CD8-positive, alpha-beta T cell (primary cell): ENCODE measurements at regions of chr16 and their contacts with region 1.

Region 1: DNA sequence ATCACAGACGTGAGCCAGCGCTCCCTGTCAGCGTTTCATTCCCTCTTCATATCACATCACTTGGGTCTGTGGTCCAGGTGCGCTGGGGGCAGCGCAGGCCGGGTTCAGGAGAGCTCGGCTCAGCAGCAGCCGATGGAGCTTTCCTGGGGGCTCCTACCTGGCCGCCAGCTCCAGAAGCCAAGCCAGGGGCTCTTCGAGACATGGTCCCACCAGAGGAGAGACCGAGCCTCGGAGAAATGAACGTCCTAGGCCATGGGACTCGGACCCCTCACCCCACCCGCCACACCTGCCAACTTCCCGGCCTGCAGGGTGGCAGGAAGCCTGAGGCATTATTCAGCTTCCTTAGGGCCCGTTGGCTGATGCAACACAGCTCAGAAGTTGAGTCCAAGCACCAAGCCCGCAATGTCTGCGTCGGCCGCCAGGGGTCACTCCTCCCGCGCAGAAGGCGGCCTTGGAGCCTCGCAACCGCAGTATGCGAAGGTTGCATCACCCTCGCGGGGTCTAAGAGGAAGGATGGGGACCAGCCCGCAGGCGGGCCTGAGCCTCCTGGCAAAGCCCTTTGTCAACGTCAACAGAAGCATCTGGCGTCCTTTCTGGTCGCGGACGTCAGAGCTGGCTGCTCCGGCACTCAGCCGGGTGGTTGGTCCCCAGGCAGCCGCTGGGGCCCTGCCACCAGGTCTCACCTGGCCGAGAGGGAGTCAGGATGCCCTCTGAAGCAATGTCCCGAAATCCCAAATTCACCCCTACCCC is 13.2 kb upstream of the KLHDC4 start:
- DNase-seq: peak; percentile 85 to 97 (median 94)
- ATAC-seq: peak; percentile 87
- H3K4me3 ChIP-seq: no peak overlapping the region
- H3K4me3 Mint-ChIP-seq: peak overlapping the region; percentile 39
- H3K27ac ChIP-seq: no peak overlapping the region
- H3K27ac Mint-ChIP-seq: peak overlapping the region; percentile 80
- H3K4me1 ChIP-seq: peaks cover 43% of the 10 kb centered on the region
- H3K4me1 Mint-ChIP-seq: peaks cover 38% of the 10 kb centered on the region
- H3K27me3 ChIP-seq: no peaks in the 10 kb centered on the region
- H3K27me3 Mint-ChIP-seq: peaks cover 2% of the 10 kb centered on the region
- CTCF ChIP-seq: peak; percentile 84

Region 2: DNA sequence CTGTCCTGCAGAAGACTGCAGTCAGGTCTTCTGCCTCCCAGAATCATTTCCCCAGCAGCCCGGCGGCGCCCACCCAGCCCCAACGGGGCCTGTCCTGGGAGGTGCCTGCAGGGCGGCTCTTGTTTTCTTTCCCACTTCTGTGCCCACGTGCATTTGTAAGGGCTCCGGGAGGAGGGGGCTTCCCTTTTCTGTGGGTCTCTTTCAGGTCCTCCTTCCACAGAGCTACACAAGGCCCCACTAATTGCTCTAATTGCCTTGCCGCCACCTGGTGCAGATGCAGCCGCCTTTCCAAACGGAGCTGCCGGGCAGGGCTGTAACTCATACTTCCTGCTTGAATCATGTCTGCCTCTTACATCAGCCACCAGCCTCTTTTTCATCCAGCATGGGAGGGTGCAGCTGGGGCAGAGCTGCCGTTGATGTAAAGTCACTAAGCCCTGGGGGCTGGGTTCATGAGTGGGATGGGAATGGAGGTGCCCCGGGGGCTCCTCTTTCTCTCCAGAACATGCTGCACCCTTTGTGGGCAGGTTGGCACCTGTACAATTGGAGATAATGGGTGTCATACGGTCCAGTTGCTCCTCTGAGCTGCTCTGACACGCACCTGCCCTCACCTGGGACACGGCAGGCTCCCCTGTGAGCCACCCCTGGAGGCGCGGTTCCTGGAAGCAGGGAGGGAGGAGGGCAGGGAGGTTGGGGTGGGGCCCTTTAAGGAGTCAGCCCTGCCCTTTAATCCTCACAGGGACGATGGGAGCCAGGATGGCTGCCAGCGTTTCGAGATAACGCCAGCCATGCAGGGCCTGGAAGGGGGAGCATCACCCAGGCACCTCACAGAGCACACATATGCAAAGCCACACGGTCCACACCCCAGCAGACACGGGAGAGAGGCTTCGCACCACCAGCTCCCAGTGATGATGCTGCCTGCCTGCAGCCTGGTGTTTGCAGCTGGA is 27.9 kb after region 1 on chr16:
- CTCF ChIA-PET with region 1: interaction called, 21 read pairs
- POLR2A ChIA-PET with region 1: interaction called, 3 read pairs
- intact Hi-C with region 1: no loop called
- DNase-seq: peak in 7 of 9 experiments; percentile 20 to 77 (median 61)
- ATAC-seq: peak; percentile 84
- H3K4me3 ChIP-seq: peak overlapping the region; percentile 30 to 48
- H3K4me3 Mint-ChIP-seq: peak overlapping the region; percentile 90
- H3K27ac ChIP-seq: peak overlapping the region in 1 of 2 experiments; percentile 40
- H3K27ac Mint-ChIP-seq: peak overlapping the region; percentile 93
- H3K4me1 ChIP-seq: peaks cover 17% of the 10 kb centered on the region
- H3K4me1 Mint-ChIP-seq: peaks cover 12% of the 10 kb centered on the region
- H3K27me3 ChIP-seq: peaks cover 0 to 2% of the 10 kb centered on the region in 2 experiments
- H3K27me3 Mint-ChIP-seq: no peaks in the 10 kb centered on the region
- CTCF ChIP-seq: no peak

Region 3: DNA sequence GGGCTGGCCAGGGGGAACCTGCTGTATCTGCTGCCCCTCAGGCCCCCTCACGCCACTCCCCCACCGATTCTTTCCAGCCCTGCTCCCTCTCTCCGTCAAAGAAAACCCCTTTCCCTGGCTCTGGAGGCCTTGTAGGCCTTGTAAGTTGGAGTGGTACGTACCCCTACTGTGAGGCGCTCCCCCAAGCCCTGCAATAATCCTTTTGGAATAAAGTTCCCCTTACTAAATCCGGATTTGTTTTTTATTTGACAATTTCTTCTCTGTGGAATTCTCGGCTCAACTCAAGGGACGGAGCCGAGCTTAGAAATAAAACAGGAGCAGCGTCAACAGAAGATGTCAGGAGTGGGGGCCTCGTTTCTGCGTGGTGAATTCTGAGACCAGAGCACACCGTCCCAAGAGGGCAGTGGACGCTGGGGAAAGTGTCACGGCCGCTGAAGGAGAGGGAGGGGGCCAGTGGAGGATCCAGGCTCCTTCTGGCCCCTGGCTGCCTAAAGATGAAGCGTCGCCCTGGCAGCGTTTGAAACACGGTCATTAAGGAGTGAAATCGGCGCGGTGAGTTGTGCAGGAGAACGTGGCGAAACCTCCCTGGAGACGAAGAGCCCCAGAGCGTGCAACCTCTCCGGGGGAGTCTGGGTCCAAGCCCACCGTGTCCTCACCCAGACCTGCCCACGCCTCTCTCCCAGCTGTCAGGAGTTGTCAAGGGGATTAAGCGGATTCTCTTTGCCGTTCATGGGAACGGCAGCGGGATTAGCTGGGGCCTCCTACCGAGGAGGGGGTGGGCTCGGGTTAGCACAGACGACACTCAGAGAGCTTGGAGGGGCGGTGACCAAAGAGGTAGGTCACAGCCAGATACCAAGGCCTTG is 43.3 kb after region 1 on chr16:
- CTCF ChIA-PET with region 1: interaction called, 16 read pairs
- POLR2A ChIA-PET with region 1: no interaction called
- intact Hi-C with region 1: no loop called
- DNase-seq: peak in 3 of 9 experiments; percentile 18 to 30 (median 18)
- ATAC-seq: no peak
- H3K4me3 ChIP-seq: no peak overlapping the region
- H3K4me3 Mint-ChIP-seq: no peak overlapping the region
- H3K27ac ChIP-seq: no peak overlapping the region
- H3K27ac Mint-ChIP-seq: peak overlapping the region; percentile 57
- H3K4me1 ChIP-seq: peaks cover 9% of the 10 kb centered on the region
- H3K4me1 Mint-ChIP-seq: peaks cover 8% of the 10 kb centered on the region
- H3K27me3 ChIP-seq: no peaks in the 10 kb centered on the region
- H3K27me3 Mint-ChIP-seq: no peaks in the 10 kb centered on the region
- CTCF ChIP-seq: no peak

Region 4: GRCh38 chr16:87844120-87844733 is 65.2 kb after region 1 on chr16:
- CTCF ChIA-PET with region 1: interaction called, 129 read pairs
- POLR2A ChIA-PET with region 1: no interaction called
- intact Hi-C with region 1: no loop called
- DNase-seq: no peak
- ATAC-seq: no peak
- H3K4me3 ChIP-seq: no peak overlapping the region
- H3K4me3 Mint-ChIP-seq: no peak overlapping the region
- H3K27ac ChIP-seq: no peak overlapping the region
- H3K27ac Mint-ChIP-seq: no peak overlapping the region
- H3K4me1 ChIP-seq: peaks cover 15% of the 10 kb centered on the region
- H3K4me1 Mint-ChIP-seq: peaks cover 16% of the 10 kb centered on the region
- H3K27me3 ChIP-seq: no peaks in the 10 kb centered on the region
- H3K27me3 Mint-ChIP-seq: no peaks in the 10 kb centered on the region
- CTCF ChIP-seq: no peak

Region 5: GRCh38 chr16:87860553-87861299 is 81.7 kb after region 1 on chr16:
- CTCF ChIA-PET with region 1: interaction called, 27 read pairs
- POLR2A ChIA-PET with region 1: no interaction called
- intact Hi-C with region 1: no loop called
- DNase-seq: peak in 2 of 9 experiments; percentile 14 to 25
- ATAC-seq: peak; percentile 12
- H3K4me3 ChIP-seq: no peak overlapping the region
- H3K4me3 Mint-ChIP-seq: peak overlapping the region; percentile 22
- H3K27ac ChIP-seq: no peak overlapping the region
- H3K27ac Mint-ChIP-seq: peak overlapping the region; percentile 18
- H3K4me1 ChIP-seq: peaks cover 21% of the 10 kb centered on the region
- H3K4me1 Mint-ChIP-seq: peaks cover 35% of the 10 kb centered on the region
- H3K27me3 ChIP-seq: no peaks in the 10 kb centered on the region
- H3K27me3 Mint-ChIP-seq: no peaks in the 10 kb centered on the region
- CTCF ChIP-seq: no peak

Region 6: GRCh38 chr16:87895641-87896141 is 116.7 kb after region 1 on chr16:
- CTCF ChIA-PET with region 1: interaction called, 16 read pairs
- POLR2A ChIA-PET with region 1: no interaction called
- intact Hi-C with region 1: no loop called
- DNase-seq: peak in 8 of 9 experiments; percentile 50 to 85 (median 72)
- ATAC-seq: peak; percentile 75
- H3K4me3 ChIP-seq: no peak overlapping the region
- H3K4me3 Mint-ChIP-seq: peak overlapping the region; percentile 54
- H3K27ac ChIP-seq: peak overlapping the region in 1 of 2 experiments; percentile 53
- H3K27ac Mint-ChIP-seq: peak overlapping the region; percentile 91
- H3K4me1 ChIP-seq: peaks cover 38% of the 10 kb centered on the region
- H3K4me1 Mint-ChIP-seq: peaks cover 35% of the 10 kb centered on the region
- H3K27me3 ChIP-seq: no peaks in the 10 kb centered on the region
- H3K27me3 Mint-ChIP-seq: no peaks in the 10 kb centered on the region
- CTCF ChIP-seq: no peak

Region 7: DNA sequence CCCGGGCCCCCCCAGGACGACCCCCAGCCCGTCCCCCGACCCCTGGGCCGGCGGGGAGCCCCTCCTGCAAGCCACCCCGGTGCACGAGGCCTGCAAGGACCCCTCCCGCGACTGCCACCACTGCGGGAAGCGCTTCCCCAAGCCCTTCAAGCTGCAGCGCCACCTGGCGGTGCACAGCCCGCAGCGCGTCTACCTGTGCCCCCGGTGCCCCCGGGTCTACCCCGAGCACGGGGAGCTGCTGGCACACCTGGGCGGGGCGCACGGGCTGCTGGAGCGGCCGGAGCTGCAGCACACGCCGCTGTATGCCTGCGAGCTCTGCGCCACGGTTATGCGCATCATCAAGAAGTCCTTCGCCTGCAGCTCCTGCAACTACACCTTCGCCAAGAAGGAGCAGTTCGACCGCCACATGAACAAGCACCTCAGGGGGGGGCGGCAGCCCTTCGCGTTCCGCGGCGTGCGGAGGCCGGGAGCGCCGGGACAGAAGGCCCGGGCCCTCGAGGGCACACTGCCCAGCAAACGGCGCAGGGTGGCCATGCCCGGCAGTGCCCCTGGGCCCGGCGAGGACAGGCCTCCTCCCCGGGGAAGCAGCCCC is 658.5 kb after region 1 on chr16:
- CTCF ChIA-PET with region 1: interaction called, 5 read pairs
- POLR2A ChIA-PET with region 1: no interaction called
- intact Hi-C with region 1: loop called in 1 of 2 experiments (anchors 1 kb)
- DNase-seq: peak in 8 of 9 experiments; percentile 50 to 79 (median 70)
- ATAC-seq: peak; percentile 94
- H3K4me3 ChIP-seq: no peak overlapping the region
- H3K4me3 Mint-ChIP-seq: no peak overlapping the region
- H3K27ac ChIP-seq: no peak overlapping the region
- H3K27ac Mint-ChIP-seq: no peak overlapping the region
- H3K4me1 ChIP-seq: no peaks in the 10 kb centered on the region
- H3K4me1 Mint-ChIP-seq: no peaks in the 10 kb centered on the region
- H3K27me3 ChIP-seq: no peaks in the 10 kb centered on the region
- H3K27me3 Mint-ChIP-seq: no peaks in the 10 kb centered on the region
- CTCF ChIP-seq: peak; percentile 73